ENCODE measurements at regions of chr19 and their contacts with region 1.

Region 1: GRCh38 chr19:49684218-49684982 is 5.0 kb upstream of the ADM5 start:
- DNase-seq: peak in 1 of 2 experiments; percentile 84
- H3K4me3 ChIP-seq: no peak overlapping the region
- H3K27ac ChIP-seq: no peak overlapping the region
- H3K4me1 ChIP-seq: peaks cover 2 to 22% (median 16%) of the 10 kb centered on the region in 4 experiments
- H3K27me3 ChIP-seq: no peaks in the 10 kb centered on the region
- CTCF ChIP-seq: peak; percentile 66 to 69 (median 68)
- EP300 ChIP-seq: no peak
- POLR2A ChIP-seq: peak in 1 of 2 experiments; percentile 68; a peak in 2 of 3 replicates
- RAD21 ChIP-seq: peak in 1 of 2 experiments; percentile 41; a peak in 2 of 4 replicates

Region 2: DNA sequence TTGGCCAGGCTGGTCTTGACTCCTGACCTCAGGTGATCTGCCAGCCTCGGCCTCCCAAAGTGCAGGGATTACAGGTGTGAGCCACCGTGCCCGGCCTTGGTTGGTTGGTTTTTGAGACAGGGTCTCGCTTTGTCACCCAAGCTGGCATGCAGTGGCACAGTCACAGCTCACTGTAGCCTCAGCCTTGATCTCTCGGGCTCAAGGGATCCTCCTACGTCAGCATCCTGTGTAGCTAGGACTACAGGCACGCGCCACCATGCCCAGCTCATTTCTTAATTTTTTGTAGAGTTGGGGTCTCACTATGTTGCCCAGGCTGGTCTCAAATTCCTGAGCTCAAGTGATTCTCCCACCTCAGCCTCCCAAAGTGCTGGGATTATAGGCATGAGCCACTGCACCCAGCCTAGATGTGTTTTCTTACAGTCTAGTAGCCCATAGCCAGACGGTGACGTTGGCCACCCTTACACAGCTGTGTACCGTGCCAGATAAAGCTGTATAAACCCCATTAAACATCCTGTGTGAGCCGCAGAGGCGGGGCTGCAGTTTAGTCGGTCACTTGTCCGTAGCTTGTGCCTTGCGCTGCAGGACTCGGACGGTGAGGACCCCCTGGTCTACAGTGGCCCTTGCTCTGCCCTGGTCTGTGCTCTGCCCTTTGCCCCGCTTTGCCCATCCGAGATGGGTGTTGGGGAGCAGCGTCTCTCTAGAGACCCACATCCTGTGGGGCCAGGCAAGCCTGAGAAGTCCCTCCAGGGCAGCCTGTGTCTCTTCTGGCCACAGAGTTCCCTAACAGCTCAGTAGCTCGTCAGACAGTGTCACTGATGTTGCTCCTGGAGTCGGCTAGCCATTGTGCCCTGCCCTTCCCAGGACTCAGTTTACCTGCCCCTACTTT is 28.6 kb before region 1 on chr19:
- CTCF ChIA-PET with region 1: interaction called, 10 read pairs
- POLR2A ChIA-PET with region 1: interaction called, 275 read pairs
- DNase-seq: no peak
- H3K4me3 ChIP-seq: no peak overlapping the region
- H3K27ac ChIP-seq: no peak overlapping the region
- H3K4me1 ChIP-seq: peaks cover 0 to 14% (median 5%) of the 10 kb centered on the region in 4 experiments; a peak in 4 of 7 replicates
- H3K27me3 ChIP-seq: no peaks in the 10 kb centered on the region
- CTCF ChIP-seq: no peak
- EP300 ChIP-seq: no peak
- POLR2A ChIP-seq: no peak
- RAD21 ChIP-seq: no peak

Region 3: DNA sequence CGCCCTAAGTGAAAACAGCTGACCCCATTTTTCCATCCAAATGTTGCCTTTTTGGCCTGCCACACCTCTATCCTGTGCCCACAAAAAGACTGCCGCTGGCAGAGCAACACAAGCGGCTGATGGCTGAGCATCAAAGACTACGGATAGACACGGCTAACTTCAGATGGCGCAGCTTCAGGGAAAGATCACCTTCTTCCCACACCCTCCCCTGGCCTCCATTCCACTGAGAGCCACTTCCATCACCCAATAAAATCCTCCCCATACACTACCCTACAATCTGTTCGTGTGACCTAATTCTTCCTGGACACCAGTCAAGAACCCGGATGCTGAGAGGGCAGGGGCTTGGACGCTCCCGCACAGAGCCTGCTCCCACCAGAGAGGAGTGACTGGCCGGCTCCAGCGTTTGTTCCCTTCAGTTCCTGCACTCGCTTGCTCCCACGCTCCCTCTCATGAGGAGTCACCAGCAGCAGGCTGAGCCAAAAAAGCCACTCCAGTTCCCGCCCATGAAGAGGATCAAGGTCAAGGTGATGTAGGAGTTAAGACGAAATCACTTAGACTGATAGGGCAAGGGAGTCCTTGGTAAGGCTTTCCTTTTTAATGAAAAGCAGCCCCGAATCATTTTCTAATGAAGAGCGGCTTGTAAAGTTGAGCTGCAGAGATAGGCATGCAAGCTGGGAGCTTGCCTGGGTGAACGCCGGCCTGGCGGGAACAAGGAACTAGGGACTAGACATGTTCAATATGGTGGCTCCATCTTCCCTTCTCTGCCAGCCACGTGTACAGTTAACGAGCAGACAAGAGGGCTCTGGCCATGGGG is 43.0 kb after region 1 on chr19:
- CTCF ChIA-PET with region 1: no interaction called
- POLR2A ChIA-PET with region 1: no interaction called
- DNase-seq: no peak
- H3K4me3 ChIP-seq: no peak overlapping the region
- H3K27ac ChIP-seq: no peak overlapping the region
- H3K4me1 ChIP-seq: no peaks in the 10 kb centered on the region
- H3K27me3 ChIP-seq: no peaks in the 10 kb centered on the region
- CTCF ChIP-seq: no peak
- EP300 ChIP-seq: no peak
- POLR2A ChIP-seq: no peak
- RAD21 ChIP-seq: no peak

Measured in H1 (cell line).